ENCODE measurements at regions of chr5 and their contacts with region 1.

Region 1: GRCh38 chr5:148820461-148821395 is 5.7 kb upstream of the ADRB2 start:
- DNase-seq: peak; percentile 63
- H3K4me3 Mint-ChIP-seq: no peak overlapping the region
- H3K27ac Mint-ChIP-seq: no peak overlapping the region
- H3K4me1 Mint-ChIP-seq: peaks cover 5% of the 10 kb centered on the region
- H3K27me3 Mint-ChIP-seq: no peaks in the 10 kb centered on the region
- CTCF ChIP-seq: peak; percentile 84

Region 2: GRCh38 chr5:148507648-148508047 is 313.1 kb before region 1 on chr5:
- CTCF ChIA-PET with region 1: no interaction called
- POLR2A ChIA-PET with region 1: no interaction called
- intact Hi-C with region 1: no loop called
- DNase-seq: no peak
- H3K4me3 Mint-ChIP-seq: no peak overlapping the region
- H3K27ac Mint-ChIP-seq: no peak overlapping the region
- H3K4me1 Mint-ChIP-seq: no peaks in the 10 kb centered on the region
- H3K27me3 Mint-ChIP-seq: peaks cover 19% of the 10 kb centered on the region
- CTCF ChIP-seq: no peak

Region 3: DNA sequence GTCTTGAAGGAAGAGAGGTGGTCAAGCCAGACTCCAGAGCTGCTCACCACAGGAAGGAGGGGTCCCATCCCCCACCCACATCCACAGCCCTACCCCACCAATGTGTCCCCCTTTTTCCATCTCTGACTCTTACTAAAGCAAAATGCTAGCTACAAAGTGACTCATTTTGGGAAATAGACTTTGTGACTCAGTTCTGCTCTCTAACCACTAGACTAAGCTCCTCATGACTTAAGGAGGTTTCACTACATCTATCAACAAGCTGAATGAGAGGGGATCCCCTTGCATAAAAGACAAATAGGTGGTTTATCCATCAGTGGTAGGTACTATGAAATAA is 29.4 kb before region 1 on chr5:
- CTCF ChIA-PET with region 1: interaction called, 19 read pairs
- POLR2A ChIA-PET with region 1: interaction called, 6 read pairs
- intact Hi-C with region 1: no loop called
- DNase-seq: peak; percentile 66
- H3K4me3 Mint-ChIP-seq: no peak overlapping the region
- H3K27ac Mint-ChIP-seq: peak overlapping the region; percentile 88
- H3K4me1 Mint-ChIP-seq: peaks cover 60% of the 10 kb centered on the region
- H3K27me3 Mint-ChIP-seq: no peaks in the 10 kb centered on the region
- CTCF ChIP-seq: no peak

Region 4: DNA sequence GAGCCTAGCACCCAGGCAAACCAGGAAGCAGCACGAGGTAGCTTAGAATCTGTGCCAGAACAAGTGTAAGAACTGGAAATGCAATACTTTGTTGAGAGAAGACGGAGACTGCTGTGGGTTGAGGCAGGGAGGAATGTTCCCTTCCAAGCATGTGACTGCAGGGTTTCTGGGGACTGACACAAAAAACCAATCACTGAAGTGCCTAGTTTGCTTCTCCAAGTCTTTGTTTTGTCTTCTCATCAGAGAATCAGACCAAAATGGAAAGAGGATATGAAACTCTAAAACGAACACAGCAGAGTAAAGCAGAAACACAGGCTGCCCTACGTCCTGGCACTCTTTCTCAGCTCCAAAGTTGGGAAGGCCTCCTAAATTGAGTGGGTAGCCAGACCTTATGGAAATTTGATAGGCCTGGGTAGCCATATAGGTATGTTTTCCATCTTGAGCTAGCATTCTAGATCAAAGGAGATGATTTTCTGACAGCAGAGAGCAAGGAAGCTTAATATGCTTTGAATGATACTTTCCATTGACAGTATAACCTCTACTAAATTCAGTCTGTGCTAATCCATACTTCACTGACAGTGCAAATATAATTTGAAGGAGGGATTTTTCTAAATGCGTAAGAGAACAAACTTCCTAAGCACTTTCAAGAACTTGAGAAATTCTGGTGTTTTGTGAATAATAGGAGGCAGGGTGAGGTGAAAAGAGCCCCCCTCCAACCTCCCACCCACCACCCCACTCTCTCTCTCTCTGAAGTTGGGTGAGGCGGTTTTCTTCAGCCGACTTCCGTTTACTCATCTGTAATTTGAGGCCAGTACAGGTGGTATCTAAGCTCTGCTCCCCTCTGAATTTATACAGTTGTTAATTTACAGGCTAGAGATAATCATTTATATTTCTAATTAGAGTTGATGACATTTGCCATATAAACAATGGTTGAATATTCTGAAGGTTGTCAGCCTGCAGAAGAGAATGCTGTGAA is 11.2 kb after region 1 on chr5:
- CTCF ChIA-PET with region 1: interaction called, 17 read pairs
- POLR2A ChIA-PET with region 1: interaction called, 10 read pairs
- intact Hi-C with region 1: no loop called
- DNase-seq: no peak
- H3K4me3 Mint-ChIP-seq: peak overlapping the region; percentile 90
- H3K27ac Mint-ChIP-seq: peak overlapping the region; percentile 69
- H3K4me1 Mint-ChIP-seq: peaks cover 87% of the 10 kb centered on the region
- H3K27me3 Mint-ChIP-seq: no peaks in the 10 kb centered on the region
- CTCF ChIP-seq: no peak

Region 5: DNA sequence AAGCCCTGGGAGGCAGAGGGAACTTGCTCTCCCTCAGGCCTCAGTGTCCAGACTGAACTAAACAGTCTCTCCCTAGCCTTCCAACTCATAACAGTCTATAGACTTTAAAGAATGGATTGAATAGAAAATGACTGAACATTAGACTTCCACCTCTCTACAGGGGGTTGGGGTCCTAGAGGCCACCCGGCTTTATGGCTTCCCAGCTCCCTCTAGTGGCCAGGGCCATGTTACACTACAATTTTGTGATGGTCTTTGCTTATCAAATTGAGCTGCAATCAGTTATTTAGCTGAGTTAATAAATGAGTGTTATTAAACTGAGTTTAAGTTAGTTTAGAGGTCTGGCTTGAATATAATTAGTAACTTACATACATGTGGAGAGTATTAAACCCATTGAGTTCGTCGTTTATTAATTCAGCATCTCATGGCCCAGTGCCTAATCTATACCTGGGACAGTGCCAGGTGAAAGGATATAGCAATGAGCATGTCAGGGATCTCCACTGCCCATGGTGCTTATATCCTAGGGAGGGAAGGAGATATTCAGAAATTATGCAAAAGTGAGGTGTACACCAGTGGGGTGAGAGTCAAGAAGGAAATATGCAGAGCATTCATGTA is 137.0 kb after region 1 on chr5:
- CTCF ChIA-PET with region 1: interaction called, 31 read pairs
- POLR2A ChIA-PET with region 1: interaction called, 136 read pairs
- intact Hi-C with region 1: no loop called
- DNase-seq: peak; percentile 71
- H3K4me3 Mint-ChIP-seq: no peak overlapping the region
- H3K27ac Mint-ChIP-seq: no peak overlapping the region
- H3K4me1 Mint-ChIP-seq: peaks cover 24% of the 10 kb centered on the region
- H3K27me3 Mint-ChIP-seq: no peaks in the 10 kb centered on the region
- CTCF ChIP-seq: peak; percentile 99

Region 6: DNA sequence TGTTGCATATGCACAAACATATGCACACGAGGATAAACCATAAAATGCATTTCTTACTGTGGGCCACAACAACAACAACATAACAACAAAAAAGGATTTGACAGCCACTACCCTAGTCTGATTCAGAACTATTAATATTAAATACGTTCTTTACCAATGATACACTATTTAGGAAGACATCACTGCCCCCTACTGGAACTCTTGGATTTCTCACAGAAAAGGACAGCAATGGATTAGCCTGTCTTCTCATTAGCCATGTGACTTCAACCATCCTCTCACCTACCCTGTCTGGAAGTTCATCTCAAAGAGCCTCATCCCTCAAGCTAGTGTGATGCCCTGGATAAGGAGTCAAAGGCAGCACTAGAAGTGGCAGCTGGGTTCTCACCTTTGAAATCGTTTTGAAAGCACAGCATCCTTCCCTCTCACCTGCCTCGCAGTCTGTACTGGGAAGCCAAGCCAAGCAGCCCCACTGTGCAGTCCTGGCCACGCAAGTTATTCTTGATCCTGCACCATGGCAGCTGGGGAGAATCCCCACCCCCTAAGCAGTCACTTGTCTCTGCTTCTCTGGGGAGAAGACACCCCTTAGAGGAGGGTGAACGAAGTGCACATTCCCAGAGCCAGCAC is 177.6 kb after region 1 on chr5:
- CTCF ChIA-PET with region 1: interaction called, 150 read pairs
- POLR2A ChIA-PET with region 1: interaction called, 255 read pairs
- intact Hi-C with region 1: loop called (anchors 1 kb)
- DNase-seq: peak; percentile 93
- H3K4me3 Mint-ChIP-seq: no peak overlapping the region
- H3K27ac Mint-ChIP-seq: peak overlapping the region; percentile 73
- H3K4me1 Mint-ChIP-seq: peaks cover 60% of the 10 kb centered on the region
- H3K27me3 Mint-ChIP-seq: no peaks in the 10 kb centered on the region
- CTCF ChIP-seq: peak; percentile 79

Measured in MCF 10A (cell line).